Lower leg skin (tissue), 4 donors: ENCODE measurements at regions of chr6 and their contacts with region 1.

Region 1: GRCh38 chr6:1540864-1541521 is 68.7 kb upstream of the FOXC1 start:
- DNase-seq: no peak
- H3K4me3 ChIP-seq: no peak overlapping the region
- CTCF ChIP-seq: no peak
- POLR2A ChIP-seq: no peak

Region 2: GRCh38 chr6:524803-525202 is 1016.2 kb before region 1 on chr6:
- intact Hi-C with region 1: no loop called
- DNase-seq: no peak
- H3K4me3 ChIP-seq: no peak overlapping the region
- CTCF ChIP-seq: no peak
- POLR2A ChIP-seq: no peak

Region 3: DNA sequence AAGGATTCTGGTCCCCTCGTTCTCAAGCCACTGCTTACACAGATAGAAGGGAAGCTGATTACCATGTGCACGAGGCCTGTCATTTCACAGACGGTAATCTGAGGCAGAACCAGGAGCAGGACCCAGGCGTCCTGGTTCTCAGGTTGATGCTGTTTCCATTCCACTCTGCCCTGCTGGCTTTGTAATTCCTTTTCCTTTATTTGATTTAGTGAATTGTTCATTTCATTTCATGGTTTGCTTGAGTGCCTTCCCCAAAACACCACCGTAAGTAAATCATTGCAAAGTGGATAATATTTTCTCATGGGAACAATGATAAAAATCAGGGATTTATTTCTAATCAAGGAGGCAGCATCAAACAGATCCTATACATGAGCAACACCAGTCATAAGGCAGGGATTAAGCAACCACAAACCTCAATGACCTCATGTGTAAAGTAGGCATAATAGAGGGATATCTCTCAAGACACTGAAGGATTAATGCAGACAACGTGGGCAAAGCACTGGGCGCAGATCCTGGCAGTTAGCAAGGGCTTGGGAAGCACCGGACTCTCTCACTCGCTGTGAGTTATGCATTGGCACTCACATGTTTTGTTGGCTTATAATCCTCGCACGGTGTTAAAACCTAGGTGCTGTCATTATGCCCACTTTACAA is 458.6 kb before region 1 on chr6:
- intact Hi-C with region 1: no loop called
- DNase-seq: peak in 1 of 2 donors; percentile 57
- H3K4me3 ChIP-seq: no peak overlapping the region
- CTCF ChIP-seq: no peak
- POLR2A ChIP-seq: no peak

Region 4: DNA sequence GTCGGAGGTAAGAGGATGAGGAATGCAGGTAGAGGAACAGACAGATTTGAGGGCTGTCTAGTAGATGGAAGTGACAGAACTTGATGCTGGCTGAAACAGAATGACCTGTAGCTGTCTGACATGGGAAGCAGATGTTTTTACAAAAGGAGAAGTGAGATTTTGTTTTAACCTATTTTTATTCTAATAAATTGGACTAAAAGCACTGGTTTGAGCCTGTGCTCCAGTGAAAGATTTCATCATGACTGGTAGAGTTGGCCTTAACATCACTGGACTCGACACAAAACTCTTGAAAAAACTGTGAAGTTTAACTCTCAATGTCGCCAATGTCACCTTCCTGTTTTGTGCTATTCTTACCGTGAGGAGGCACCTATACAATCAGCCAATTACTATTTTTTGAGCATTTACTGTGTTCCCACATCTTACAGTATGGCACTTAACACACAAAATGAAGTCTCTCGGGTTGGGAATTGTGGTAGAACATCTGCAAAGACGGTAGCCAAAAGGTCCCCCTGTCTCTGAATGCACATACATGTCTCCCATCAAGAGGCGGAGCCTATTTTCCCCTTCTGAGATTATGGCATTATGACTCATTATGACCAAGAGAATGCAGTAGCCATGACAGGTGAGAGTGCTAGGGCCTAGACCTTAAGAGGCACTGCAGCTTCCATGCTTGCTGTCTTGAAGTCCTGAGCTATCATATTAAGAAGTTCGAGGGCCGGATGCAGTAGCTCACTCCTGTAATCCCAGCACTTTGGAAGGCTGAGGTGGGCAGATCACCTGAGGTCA is 58.4 kb before region 1 on chr6:
- intact Hi-C with region 1: loop called (anchors 5 kb)
- DNase-seq: no peak
- H3K4me3 ChIP-seq: no peak overlapping the region
- CTCF ChIP-seq: no peak
- POLR2A ChIP-seq: no peak